Activated CD4-positive, alpha-beta T cell treated with anti-CD3 and anti-CD28 coated beads for 36 hours (primary cell): ENCODE measurements at regions of chr3 and their contacts with region 1.

Region 1: GRCh38 chr3:184636741-184637316 is 75.0 kb downstream of the MAGEF1 start:
- DNase-seq: peak; percentile 80
- ATAC-seq: peak; percentile 90
- H3K4me3 Mint-ChIP-seq: no peak overlapping the region
- H3K27ac Mint-ChIP-seq: no peak overlapping the region
- H3K4me1 Mint-ChIP-seq: peaks cover 4% of the 10 kb centered on the region
- H3K27me3 Mint-ChIP-seq: peaks cover 3% of the 10 kb centered on the region

Region 2: GRCh38 chr3:184656829-184657681 is 20.2 kb after region 1 on chr3:
- CTCF ChIA-PET with region 1: no interaction called
- POLR2A ChIA-PET with region 1: no interaction called
- intact Hi-C with region 1: loop called in 1 of 2 experiments (anchors 1 kb)
- DNase-seq: peak; percentile 68
- ATAC-seq: peak; percentile 90
- H3K4me3 Mint-ChIP-seq: no peak overlapping the region
- H3K27ac Mint-ChIP-seq: no peak overlapping the region
- H3K4me1 Mint-ChIP-seq: peaks cover 18% of the 10 kb centered on the region
- H3K27me3 Mint-ChIP-seq: no peaks in the 10 kb centered on the region

Region 3: GRCh38 chr3:184711493-184712247 is 74.8 kb after region 1 on chr3 and contains the start of gene MAGEF1:
- CTCF ChIA-PET with region 1: no interaction called
- POLR2A ChIA-PET with region 1: interaction called, 3 read pairs
- intact Hi-C with region 1: loop called (anchors 1 kb)
- DNase-seq: peak; percentile 85
- ATAC-seq: peak; percentile 87
- H3K4me3 Mint-ChIP-seq: peak within 1 kb of the TSS; percentile 80
- H3K27ac Mint-ChIP-seq: peak within 1 kb of the TSS; percentile 97
- H3K4me1 Mint-ChIP-seq: peaks cover 32% of the 10 kb centered on the region
- H3K27me3 Mint-ChIP-seq: peaks cover 2% of the 10 kb centered on the region
- total RNA-seq, gene MAGEF1: 13.6 to 14.3 TPM

Region 4: DNA sequence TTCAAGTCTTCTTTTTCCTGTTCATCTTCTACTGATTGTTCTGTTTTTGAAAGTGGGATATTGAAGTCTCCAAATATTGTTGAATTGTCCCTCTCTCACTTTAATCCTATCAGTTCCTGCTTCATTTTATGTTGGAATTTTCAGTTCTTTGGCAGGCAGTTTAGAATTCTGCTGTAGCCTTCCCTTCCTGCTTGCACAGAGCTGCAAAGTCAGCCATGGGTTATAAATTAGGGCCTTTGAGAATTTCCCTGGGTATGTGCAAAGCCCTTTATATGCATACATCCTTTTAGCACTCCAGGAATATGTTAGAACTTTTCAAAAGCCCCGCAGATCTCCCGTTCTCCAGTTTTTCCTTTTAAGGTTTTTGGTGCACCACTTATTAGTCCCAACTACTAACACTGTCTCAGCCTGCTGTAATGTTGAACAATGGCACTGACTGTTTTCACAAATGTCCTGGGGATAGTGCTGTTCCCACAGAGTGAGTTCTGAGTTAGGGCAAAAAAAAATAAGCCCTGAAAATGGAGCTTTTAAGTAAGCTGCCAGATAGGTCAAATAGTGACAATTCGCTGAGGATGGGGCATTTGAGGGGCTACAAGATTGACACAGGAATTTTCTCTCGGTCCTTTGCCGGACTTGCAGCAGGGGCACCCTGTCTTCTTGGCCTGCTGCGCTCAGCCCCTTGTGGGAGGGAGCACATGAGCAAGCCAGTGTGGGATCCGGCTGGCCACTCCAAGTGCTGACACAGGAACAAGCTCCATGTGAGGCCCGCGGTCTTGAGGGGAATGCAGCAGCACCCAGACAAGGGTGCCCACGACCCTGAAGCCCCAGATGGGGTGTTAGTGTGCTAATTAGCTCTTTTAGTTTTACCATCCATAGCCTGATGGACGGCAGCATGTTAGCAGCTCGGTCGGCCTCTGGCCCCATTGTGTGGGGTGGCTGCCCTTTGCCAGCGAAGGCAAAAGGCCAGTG is 271.1 kb after region 1 on chr3:
- CTCF ChIA-PET with region 1: no interaction called
- POLR2A ChIA-PET with region 1: no interaction called
- intact Hi-C with region 1: no loop called
- DNase-seq: no peak
- ATAC-seq: no peak
- H3K4me3 Mint-ChIP-seq: no peak overlapping the region
- H3K27ac Mint-ChIP-seq: no peak overlapping the region
- H3K4me1 Mint-ChIP-seq: no peaks in the 10 kb centered on the region
- H3K27me3 Mint-ChIP-seq: no peaks in the 10 kb centered on the region